B cell (primary cell): ENCODE measurements at regions of chr21 and their contacts with region 1.

Region 1: GRCh38 chr21:35932232-35932911 is 128.0 kb downstream of the SETD4 start:
- DNase-seq: peak; percentile 85
- ATAC-seq: peak; percentile 91
- H3K4me3 ChIP-seq: no peak overlapping the region
- H3K4me3 Mint-ChIP-seq: no peak overlapping the region
- H3K27ac ChIP-seq: peak overlapping the region; percentile 24 to 49
- H3K27ac Mint-ChIP-seq: no peak overlapping the region
- H3K4me1 ChIP-seq: peaks cover 14 to 17% of the 10 kb centered on the region in 2 donors
- H3K4me1 Mint-ChIP-seq: no peaks in the 10 kb centered on the region
- H3K27me3 ChIP-seq: no peaks in the 10 kb centered on the region
- H3K27me3 Mint-ChIP-seq: peaks cover 1% of the 10 kb centered on the region
- CTCF ChIP-seq: no peak

Region 2: GRCh38 chr21:35649186-35649585 is 283.2 kb before region 1 on chr21:
- CTCF ChIA-PET with region 1: no interaction called
- POLR2A ChIA-PET with region 1: no interaction called
- intact Hi-C with region 1: no loop called
- DNase-seq: no peak
- ATAC-seq: no peak
- H3K4me3 ChIP-seq: no peak overlapping the region
- H3K4me3 Mint-ChIP-seq: no peak overlapping the region
- H3K27ac ChIP-seq: no peak overlapping the region
- H3K27ac Mint-ChIP-seq: no peak overlapping the region
- H3K4me1 ChIP-seq: no peaks in the 10 kb centered on the region
- H3K4me1 Mint-ChIP-seq: no peaks in the 10 kb centered on the region
- H3K27me3 ChIP-seq: no peaks in the 10 kb centered on the region
- H3K27me3 Mint-ChIP-seq: peaks cover 32% of the 10 kb centered on the region
- CTCF ChIP-seq: no peak

Region 3: GRCh38 chr21:36079010-36079649 is 146.8 kb after region 1 on chr21:
- CTCF ChIA-PET with region 1: no interaction called
- POLR2A ChIA-PET with region 1: no interaction called
- intact Hi-C with region 1: loop called (anchors 5 kb)
- DNase-seq: peak; percentile 61
- ATAC-seq: peak; percentile 79
- H3K4me3 ChIP-seq: peak overlapping the region in 1 of 5 experiments; percentile 20
- H3K4me3 Mint-ChIP-seq: peak overlapping the region; percentile 64
- H3K27ac ChIP-seq: peak overlapping the region; percentile 35 to 51
- H3K27ac Mint-ChIP-seq: peak overlapping the region; percentile 90
- H3K4me1 ChIP-seq: peaks cover 26 to 29% of the 10 kb centered on the region in 2 donors
- H3K4me1 Mint-ChIP-seq: peaks cover 37% of the 10 kb centered on the region
- H3K27me3 ChIP-seq: no peaks in the 10 kb centered on the region
- H3K27me3 Mint-ChIP-seq: no peaks in the 10 kb centered on the region
- CTCF ChIP-seq: no peak